Ascending aorta (tissue), 2 donors: ENCODE measurements at regions of chr16 and their contacts with region 1.

Region 1: GRCh38 chr16:19375561-19376158 is 42.0 kb upstream of the TMC5 start:
- DNase-seq: no peak
- H3K4me3 ChIP-seq: no peak overlapping the region
- H3K27ac ChIP-seq: no peak overlapping the region
- H3K4me1 ChIP-seq: no peaks in the 10 kb centered on the region
- H3K27me3 ChIP-seq: no peaks in the 10 kb centered on the region
- CTCF ChIP-seq: peak; percentile 66 to 85 (median 70)

Region 2: GRCh38 chr16:18983565-18984424 is 391.9 kb before region 1 on chr16 and contains the start of gene TMC7:
- intact Hi-C with region 1: loop called (anchors 10 kb)
- DNase-seq: peak in 1 of 2 donors; percentile 84
- H3K4me3 ChIP-seq: peak within 1 kb of the TSS; percentile 44 to 82
- H3K27ac ChIP-seq: peak within 1 kb of the TSS in 1 of 2 donors; percentile 67
- H3K4me1 ChIP-seq: no peaks in the 10 kb centered on the region
- H3K27me3 ChIP-seq: no peaks in the 10 kb centered on the region
- CTCF ChIP-seq: peak; percentile 47 to 81 (median 50)
- total RNA-seq, gene TMC7: 10.0 TPM

Region 3: GRCh38 chr16:19167710-19168370 is 207.8 kb before region 1 on chr16 and contains the start of gene SYT17:
- intact Hi-C with region 1: loop called (anchors 1 kb)
- DNase-seq: peak in 1 of 2 donors; percentile 75
- H3K4me3 ChIP-seq: peak within 1 kb of the TSS; percentile 52 to 72
- H3K27ac ChIP-seq: peak within 1 kb of the TSS in 1 of 2 donors; percentile 10
- H3K4me1 ChIP-seq: peaks cover 3 to 4% of the 10 kb centered on the region in 2 donors
- H3K27me3 ChIP-seq: no peaks in the 10 kb centered on the region
- CTCF ChIP-seq: peak; percentile 42 to 82 (median 55)
- total RNA-seq, gene SYT17: 2.4 TPM

Region 4: GRCh38 chr16:19613834-19614233 is 238.2 kb after region 1 on chr16:
- intact Hi-C with region 1: no loop called
- DNase-seq: no peak
- H3K4me3 ChIP-seq: no peak overlapping the region
- H3K27ac ChIP-seq: no peak overlapping the region
- H3K4me1 ChIP-seq: no peaks in the 10 kb centered on the region
- H3K27me3 ChIP-seq: no peaks in the 10 kb centered on the region
- CTCF ChIP-seq: no peak